Right lobe of liver (tissue), 6 donors: ENCODE measurements at regions of chr1 and their contacts with region 1.

Region 1: DNA sequence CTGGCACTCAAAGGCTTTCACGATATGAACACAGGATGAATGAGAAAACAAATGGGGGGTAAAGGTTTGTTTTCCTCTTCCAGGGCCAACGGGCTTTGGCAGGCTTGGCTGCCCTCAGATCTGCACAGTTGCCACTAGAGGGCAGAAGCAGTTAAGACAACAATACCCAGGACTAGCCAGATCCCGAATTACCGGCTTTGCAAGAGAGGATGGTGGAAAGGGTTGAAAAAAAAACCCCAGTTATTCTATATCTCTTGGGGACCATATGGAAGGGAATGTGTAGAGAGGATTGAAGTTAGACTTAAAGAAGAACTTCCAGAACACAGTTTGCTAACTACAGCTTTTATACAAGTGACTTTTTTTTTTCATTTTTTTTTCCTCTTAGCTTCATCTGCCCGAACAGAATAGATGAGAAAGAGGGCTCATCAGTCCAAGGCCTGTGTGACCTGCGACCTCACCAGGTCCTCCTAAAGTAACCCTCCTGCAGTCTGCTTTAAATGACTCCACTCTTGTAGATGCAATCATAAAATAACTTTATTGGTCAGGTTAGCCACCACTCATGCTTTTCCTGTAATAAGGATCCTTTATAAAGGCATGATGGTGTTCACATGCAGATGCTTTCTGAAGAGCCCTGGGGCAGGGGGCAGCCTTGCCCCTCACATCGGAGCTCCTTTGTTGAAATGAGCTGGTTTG is 10.7 kb downstream of the FMOD start:
- DNase-seq: peak; percentile 62 to 83 (median 75)
- ATAC-seq: peak; percentile 92 to 95 (median 94)
- H3K4me3 ChIP-seq: no peak overlapping the region
- H3K27ac ChIP-seq: no peak overlapping the region
- H3K4me1 ChIP-seq: peaks cover 0 to 18% (median 2%) of the 10 kb centered on the region in 4 donors
- H3K27me3 ChIP-seq: no peaks in the 10 kb centered on the region
- CTCF ChIP-seq: peak; percentile 86 to 95 (median 92)
- POLR2A ChIP-seq: no peak

Region 2: DNA sequence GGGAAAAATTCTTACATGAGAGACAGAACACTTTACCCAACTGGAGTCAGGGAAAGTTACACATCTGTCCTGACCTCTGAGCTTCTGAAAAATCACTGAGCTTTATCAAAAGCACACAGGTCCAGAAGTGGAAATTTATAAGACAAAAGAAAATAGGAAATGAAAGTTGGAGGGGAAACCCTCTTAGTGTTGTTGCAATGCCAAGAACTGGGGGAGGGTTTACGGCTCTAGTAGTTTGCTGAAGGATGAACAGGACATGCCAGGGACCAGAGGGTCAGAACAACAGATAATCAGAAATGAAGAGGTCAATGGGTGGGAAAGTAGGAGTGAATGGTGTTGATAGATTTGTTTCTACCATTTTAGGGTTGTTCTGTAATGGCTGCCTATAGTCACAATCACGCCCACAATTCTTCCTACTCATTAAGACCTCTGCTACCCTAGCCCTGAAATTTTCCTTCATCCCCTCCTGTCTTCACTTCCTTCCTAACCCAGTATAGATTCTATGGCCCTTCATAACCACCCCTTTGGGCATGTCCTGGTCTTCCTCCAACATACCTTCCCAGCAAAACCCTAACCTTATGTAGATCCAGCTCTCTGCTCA is 41.0 kb after region 1 on chr1:
- intact Hi-C with region 1: no loop called
- DNase-seq: no peak
- ATAC-seq: peak; percentile 14 to 53 (median 30)
- H3K4me3 ChIP-seq: no peak overlapping the region
- H3K27ac ChIP-seq: no peak overlapping the region
- H3K4me1 ChIP-seq: no peaks in the 10 kb centered on the region
- H3K27me3 ChIP-seq: no peaks in the 10 kb centered on the region
- CTCF ChIP-seq: no peak
- POLR2A ChIP-seq: no peak

Region 3: GRCh38 chr1:203486618-203487370 is 146.5 kb after region 1 on chr1:
- intact Hi-C with region 1: loop called (anchors 5 kb)
- DNase-seq: no peak
- ATAC-seq: no peak
- H3K4me3 ChIP-seq: no peak overlapping the region
- H3K27ac ChIP-seq: peak overlapping the region in 1 of 3 donors; percentile 10
- H3K4me1 ChIP-seq: no peaks in the 10 kb centered on the region
- H3K27me3 ChIP-seq: no peaks in the 10 kb centered on the region
- CTCF ChIP-seq: no peak
- POLR2A ChIP-seq: no peak